A673 (cell line): ENCODE measurements at regions of chr18 and their contacts with region 1.

Region 1: DNA sequence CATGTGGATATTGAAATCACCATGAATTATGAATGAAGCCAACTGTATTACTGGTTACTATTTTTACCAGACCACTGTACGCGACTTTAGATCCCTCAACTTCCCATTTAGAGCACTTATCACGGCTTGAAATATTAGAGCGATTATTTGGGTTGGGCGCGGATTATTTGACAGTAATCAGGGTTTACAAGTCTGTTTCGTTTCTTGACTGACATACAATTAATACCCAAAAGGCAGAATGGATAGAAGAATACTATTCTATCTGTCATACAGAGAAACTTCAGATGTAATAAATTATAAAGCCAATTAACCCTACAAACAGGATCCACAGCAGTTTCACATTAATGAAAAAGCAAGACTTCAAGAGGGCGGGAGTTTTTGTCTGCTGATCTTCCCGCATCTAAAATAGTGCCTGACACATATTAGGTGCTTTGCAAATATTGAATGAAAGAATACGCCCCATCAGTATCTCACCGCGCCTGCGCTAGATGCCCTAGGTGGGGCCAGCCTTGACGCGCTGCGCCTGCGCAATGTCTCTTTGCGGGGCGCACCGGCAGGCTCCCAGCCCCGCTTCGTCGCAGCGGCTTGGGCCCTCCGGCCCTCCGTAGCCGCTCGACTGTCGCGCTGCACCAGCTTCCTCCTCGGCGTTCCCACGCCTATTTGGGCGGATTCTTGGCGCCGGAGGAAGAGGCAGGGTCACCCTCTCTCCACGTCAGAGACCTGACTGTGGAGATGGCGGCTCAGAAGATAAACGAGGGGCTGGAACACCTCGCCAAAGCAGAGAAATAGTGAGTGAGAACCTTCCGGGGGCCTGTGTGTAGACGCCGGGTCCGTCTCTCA is at the start of gene NAPG:
- DNase-seq: peak; percentile 97
- H3K4me3 ChIP-seq: peak within 1 kb of the TSS; percentile 81
- H3K27ac ChIP-seq: peak within 1 kb of the TSS; percentile 86
- H3K4me1 ChIP-seq: peaks cover 19% of the 10 kb centered on the region
- H3K27me3 ChIP-seq: no peaks in the 10 kb centered on the region
- CTCF ChIP-seq: no peak
- total RNA-seq, gene NAPG: 54.0 and 57.5 TPM in 2 replicates

Region 2: GRCh38 chr18:9614401-9615279 is 911.0 kb before region 1 on chr18 and contains the start of gene PPP4R1:
- CTCF ChIA-PET with region 1: no interaction called
- POLR2A ChIA-PET with region 1: no interaction called
- intact Hi-C with region 1: loop called (anchors 10 kb)
- DNase-seq: peak; percentile 76
- H3K4me3 ChIP-seq: peak within 1 kb of the TSS; percentile 84
- H3K27ac ChIP-seq: peak within 1 kb of the TSS; percentile 87
- H3K4me1 ChIP-seq: peaks cover 13% of the 10 kb centered on the region
- H3K27me3 ChIP-seq: no peaks in the 10 kb centered on the region
- CTCF ChIP-seq: no peak
- total RNA-seq, gene PPP4R1: 65.2 and 67.4 TPM in 2 replicates

Region 3: DNA sequence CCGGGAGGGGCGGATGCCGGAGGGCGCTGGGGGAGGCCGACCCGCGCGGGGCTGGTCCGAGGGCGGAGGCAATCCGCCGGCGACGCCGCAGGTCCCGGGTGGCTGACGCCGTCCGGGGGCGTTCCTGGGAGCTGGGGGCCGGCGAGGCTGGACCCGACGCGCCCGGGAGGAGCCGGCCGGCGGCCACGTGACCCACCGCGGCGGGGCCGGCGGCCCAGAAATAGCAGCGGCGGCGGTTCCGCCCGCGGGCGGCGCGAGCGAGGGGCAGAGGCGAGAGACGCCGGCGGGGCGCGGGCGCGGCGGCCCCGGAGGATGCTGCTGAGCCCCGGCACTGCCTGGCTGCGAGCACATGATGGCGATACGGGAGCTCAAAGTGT is 817.5 kb before region 1 on chr18 and contains the start of gene RAB31:
- CTCF ChIA-PET with region 1: no interaction called
- POLR2A ChIA-PET with region 1: no interaction called
- intact Hi-C with region 1: loop called (anchors 10 kb)
- DNase-seq: peak; percentile 48
- H3K4me3 ChIP-seq: peak within 1 kb of the TSS; percentile 68
- H3K27ac ChIP-seq: peak within 1 kb of the TSS; percentile 48
- H3K4me1 ChIP-seq: peaks cover 12% of the 10 kb centered on the region
- H3K27me3 ChIP-seq: no peaks in the 10 kb centered on the region
- CTCF ChIP-seq: no peak
- total RNA-seq, gene RAB31: 6.1 and 8.1 TPM in 2 replicates

Region 4: GRCh38 chr18:10353791-10354190 is 171.8 kb before region 1 on chr18:
- CTCF ChIA-PET with region 1: no interaction called
- POLR2A ChIA-PET with region 1: no interaction called
- intact Hi-C with region 1: loop called (anchors 10 kb)
- DNase-seq: peak; percentile 68
- H3K4me3 ChIP-seq: no peak overlapping the region
- H3K27ac ChIP-seq: no peak overlapping the region
- H3K4me1 ChIP-seq: peaks cover 11% of the 10 kb centered on the region
- H3K27me3 ChIP-seq: no peaks in the 10 kb centered on the region
- CTCF ChIP-seq: no peak

Region 5: DNA sequence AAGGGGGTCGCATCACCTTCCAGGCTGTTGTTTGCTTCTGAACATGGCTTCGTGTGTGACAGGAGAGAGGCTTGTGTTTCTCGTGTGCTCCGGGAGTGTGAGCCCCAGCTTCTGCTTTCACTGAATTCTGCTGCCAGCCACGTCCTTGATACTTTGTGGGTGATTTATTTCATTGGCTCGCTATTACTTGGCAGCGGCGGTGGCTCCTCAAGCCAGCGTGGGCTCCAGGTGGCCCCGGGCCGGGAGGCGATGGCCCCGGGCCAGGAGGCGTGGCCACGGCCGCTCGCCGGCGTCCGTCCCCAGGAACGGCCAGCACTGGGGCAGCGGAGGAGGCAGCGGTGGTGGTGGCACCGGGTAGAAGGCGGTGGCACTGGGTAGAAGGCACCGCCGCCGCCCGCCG is 63.4 kb after region 1 on chr18:
- CTCF ChIA-PET with region 1: no interaction called
- POLR2A ChIA-PET with region 1: no interaction called
- intact Hi-C with region 1: loop called (anchors 10 kb)
- DNase-seq: no peak
- H3K4me3 ChIP-seq: no peak overlapping the region
- H3K27ac ChIP-seq: no peak overlapping the region
- H3K4me1 ChIP-seq: no peaks in the 10 kb centered on the region
- H3K27me3 ChIP-seq: no peaks in the 10 kb centered on the region
- CTCF ChIP-seq: no peak

Region 6: GRCh38 chr18:11149441-11150270 is 624.1 kb after region 1 on chr18 and contains the start of gene PIEZO2:
- CTCF ChIA-PET with region 1: no interaction called
- POLR2A ChIA-PET with region 1: no interaction called
- intact Hi-C with region 1: no loop called
- DNase-seq: peak; percentile 81
- H3K4me3 ChIP-seq: peak within 1 kb of the TSS; percentile 39
- H3K27ac ChIP-seq: no peak within 1 kb of the TSS
- H3K4me1 ChIP-seq: peaks cover 17% of the 10 kb centered on the region
- H3K27me3 ChIP-seq: peaks cover 52% of the 10 kb centered on the region
- CTCF ChIP-seq: no peak
- total RNA-seq, gene PIEZO2: 5.5 and 8.8 TPM in 2 replicates